MCF 10A (cell line): ENCODE measurements at regions of chr12 and their contacts with region 1.

Region 1: GRCh38 chr12:104108755-104109445 is 29.1 kb downstream of the NFYB start:
- DNase-seq: peak; percentile 86
- H3K4me3 Mint-ChIP-seq: no peak overlapping the region
- H3K27ac Mint-ChIP-seq: no peak overlapping the region
- H3K4me1 Mint-ChIP-seq: peaks cover 15% of the 10 kb centered on the region
- H3K27me3 Mint-ChIP-seq: no peaks in the 10 kb centered on the region
- CTCF ChIP-seq: peak; percentile 80

Region 2: DNA sequence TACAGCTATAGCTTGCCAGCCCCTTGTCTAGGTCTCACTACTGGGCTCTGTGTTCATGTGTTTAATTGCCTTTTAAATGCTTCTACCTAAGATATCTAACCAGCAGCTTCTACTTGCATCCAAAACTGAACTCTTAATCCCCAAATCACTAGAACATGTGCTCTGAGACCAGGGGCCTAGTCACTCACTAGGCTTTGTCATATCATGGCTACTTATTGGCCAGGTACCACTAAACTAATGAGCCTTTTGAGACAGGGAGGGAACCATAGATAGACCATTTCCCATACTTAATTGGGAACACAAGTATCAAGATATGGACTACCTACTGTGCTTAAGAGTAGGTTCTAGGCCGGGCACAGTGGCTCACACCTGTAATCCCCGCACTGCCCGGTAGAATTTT is 172.2 kb before region 1 on chr12:
- CTCF ChIA-PET with region 1: interaction called, 11 read pairs
- POLR2A ChIA-PET with region 1: no interaction called
- intact Hi-C with region 1: no loop called
- DNase-seq: no peak
- H3K4me3 Mint-ChIP-seq: no peak overlapping the region
- H3K27ac Mint-ChIP-seq: no peak overlapping the region
- H3K4me1 Mint-ChIP-seq: peaks cover 30% of the 10 kb centered on the region
- H3K27me3 Mint-ChIP-seq: no peaks in the 10 kb centered on the region
- CTCF ChIP-seq: no peak

Region 3: GRCh38 chr12:103978384-103978982 is 130.4 kb before region 1 on chr12:
- CTCF ChIA-PET with region 1: interaction called, 11 read pairs
- POLR2A ChIA-PET with region 1: no interaction called
- intact Hi-C with region 1: no loop called
- DNase-seq: no peak
- H3K4me3 Mint-ChIP-seq: no peak overlapping the region
- H3K27ac Mint-ChIP-seq: no peak overlapping the region
- H3K4me1 Mint-ChIP-seq: peaks cover 5% of the 10 kb centered on the region
- H3K27me3 Mint-ChIP-seq: no peaks in the 10 kb centered on the region
- CTCF ChIP-seq: no peak

Region 4: DNA sequence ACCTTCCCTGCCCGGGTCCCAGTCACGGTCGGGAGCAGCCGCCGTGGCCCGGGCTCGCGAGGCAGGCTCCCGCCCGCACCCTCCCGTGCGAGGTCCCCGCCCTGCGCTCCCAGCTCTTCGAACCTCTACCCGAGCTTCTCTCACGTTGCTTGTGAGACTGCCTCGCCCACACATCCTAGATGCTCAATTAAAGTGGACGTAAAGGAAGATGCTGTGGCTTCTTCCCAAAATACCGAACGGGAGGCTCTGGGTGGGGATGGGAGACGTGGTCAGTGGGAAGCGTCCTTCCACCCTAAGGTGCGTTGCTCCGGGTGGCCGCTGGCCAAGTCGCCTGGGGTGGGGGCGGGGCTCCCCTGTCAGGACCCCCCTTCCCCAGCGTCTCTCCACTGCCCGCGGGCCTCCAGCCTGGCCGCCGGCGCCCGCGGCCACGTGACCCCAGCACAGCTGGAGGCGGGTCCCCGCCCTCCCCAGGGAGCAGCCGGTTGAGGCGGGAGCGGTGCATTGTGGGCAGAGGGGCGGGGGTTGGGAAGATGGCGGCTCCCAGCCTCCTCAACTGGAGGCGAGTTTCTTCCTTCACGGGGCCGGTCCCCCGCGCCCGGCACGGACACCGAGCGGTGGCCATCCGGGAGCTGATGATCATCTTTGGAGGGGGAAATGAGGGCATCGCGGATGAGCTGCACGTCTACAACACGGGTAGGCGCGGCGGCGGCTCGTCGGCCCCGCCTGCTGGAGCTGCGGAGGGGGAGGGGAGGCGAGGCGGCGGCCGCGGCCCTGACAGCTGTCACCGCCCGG is 44.7 kb before region 1 on chr12 and contains the start of gene HCFC2:
- CTCF ChIA-PET with region 1: interaction called, 24 read pairs
- POLR2A ChIA-PET with region 1: interaction called, 3 read pairs
- intact Hi-C with region 1: no loop called
- DNase-seq: peak; percentile 82
- H3K4me3 Mint-ChIP-seq: peak within 1 kb of the TSS; percentile 91
- H3K27ac Mint-ChIP-seq: peak within 1 kb of the TSS; percentile 75
- H3K4me1 Mint-ChIP-seq: peaks cover 15% of the 10 kb centered on the region
- H3K27me3 Mint-ChIP-seq: no peaks in the 10 kb centered on the region
- CTCF ChIP-seq: no peak
- total RNA-seq, gene HCFC2: 10.3 and 11.4 TPM in 2 replicates

Region 5: DNA sequence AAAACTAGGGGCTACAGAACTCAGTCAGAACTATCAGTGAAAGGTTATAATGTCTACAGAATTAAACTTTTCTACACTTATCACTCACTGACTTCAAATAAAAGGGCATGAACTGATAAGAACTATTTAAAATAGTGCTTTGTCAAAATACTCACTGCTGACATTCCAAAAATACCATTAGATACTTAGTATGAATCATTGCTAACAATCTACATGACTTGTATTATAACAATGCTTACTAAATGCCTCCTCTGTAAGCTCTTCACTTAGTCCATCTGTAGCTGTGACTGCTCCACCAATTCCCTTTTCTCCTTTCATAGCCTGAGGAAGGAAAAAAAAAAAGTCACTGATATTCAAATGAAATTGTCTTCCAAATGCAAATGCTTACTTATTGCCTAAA is 12.1 kb after region 1 on chr12:
- CTCF ChIA-PET with region 1: interaction called, 30 read pairs
- POLR2A ChIA-PET with region 1: interaction called, 3 read pairs
- intact Hi-C with region 1: no loop called
- DNase-seq: no peak
- H3K4me3 Mint-ChIP-seq: no peak overlapping the region
- H3K27ac Mint-ChIP-seq: peak overlapping the region; percentile 16
- H3K4me1 Mint-ChIP-seq: peaks cover 6% of the 10 kb centered on the region
- H3K27me3 Mint-ChIP-seq: no peaks in the 10 kb centered on the region
- CTCF ChIP-seq: no peak

Region 6: GRCh38 chr12:104201238-104202001 is 92.5 kb after region 1 on chr12:
- CTCF ChIA-PET with region 1: no interaction called
- POLR2A ChIA-PET with region 1: no interaction called
- intact Hi-C with region 1: no loop called
- DNase-seq: peak; percentile 74
- H3K4me3 Mint-ChIP-seq: no peak overlapping the region
- H3K27ac Mint-ChIP-seq: no peak overlapping the region
- H3K4me1 Mint-ChIP-seq: peaks cover 18% of the 10 kb centered on the region
- H3K27me3 Mint-ChIP-seq: no peaks in the 10 kb centered on the region
- CTCF ChIP-seq: peak; percentile 86

Region 7: DNA sequence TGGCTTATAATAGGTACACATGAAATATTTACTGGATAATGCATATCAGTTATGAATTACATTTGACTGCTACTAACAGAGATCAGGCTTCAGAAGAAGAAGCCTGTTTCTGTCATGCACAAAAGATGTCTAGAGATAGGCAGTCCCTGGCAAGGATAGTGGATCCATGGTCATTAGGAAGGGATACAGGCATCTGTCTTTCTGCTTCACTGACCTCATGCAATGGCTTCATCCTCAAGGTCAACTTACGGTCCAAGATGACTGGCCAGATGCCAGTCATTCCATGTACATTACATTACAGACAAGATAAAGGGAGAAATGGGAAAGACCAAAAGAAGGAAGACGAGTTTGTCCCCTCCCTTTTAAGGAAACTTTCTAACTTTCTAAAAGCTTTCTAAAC is 1935.9 kb after region 1 on chr12:
- CTCF ChIA-PET with region 1: no interaction called
- POLR2A ChIA-PET with region 1: no interaction called
- intact Hi-C with region 1: no loop called
- DNase-seq: no peak
- H3K4me3 Mint-ChIP-seq: no peak overlapping the region
- H3K27ac Mint-ChIP-seq: no peak overlapping the region
- H3K4me1 Mint-ChIP-seq: no peaks in the 10 kb centered on the region
- H3K27me3 Mint-ChIP-seq: no peaks in the 10 kb centered on the region
- CTCF ChIP-seq: no peak